Transverse colon (tissue), 4 donors: ENCODE measurements at regions of chr4 and their contacts with region 1.

Region 1: GRCh38 chr4:76007094-76007862 is at the start of gene CXCL9:
- DNase-seq: no peak
- H3K4me3 ChIP-seq: no peak within 1 kb of the TSS
- H3K27ac ChIP-seq: no peak within 1 kb of the TSS
- H3K4me1 ChIP-seq: peaks cover 0 to 24% (median 0%) of the 10 kb centered on the region in 4 donors
- H3K27me3 ChIP-seq: no peaks in the 10 kb centered on the region
- CTCF ChIP-seq: no peak
- EP300 ChIP-seq: no peak
- POLR2A ChIP-seq: no peak
- total RNA-seq, gene CXCL9: 2.5 TPM in 1 of 4 donors, not detected in the others

Region 2: DNA sequence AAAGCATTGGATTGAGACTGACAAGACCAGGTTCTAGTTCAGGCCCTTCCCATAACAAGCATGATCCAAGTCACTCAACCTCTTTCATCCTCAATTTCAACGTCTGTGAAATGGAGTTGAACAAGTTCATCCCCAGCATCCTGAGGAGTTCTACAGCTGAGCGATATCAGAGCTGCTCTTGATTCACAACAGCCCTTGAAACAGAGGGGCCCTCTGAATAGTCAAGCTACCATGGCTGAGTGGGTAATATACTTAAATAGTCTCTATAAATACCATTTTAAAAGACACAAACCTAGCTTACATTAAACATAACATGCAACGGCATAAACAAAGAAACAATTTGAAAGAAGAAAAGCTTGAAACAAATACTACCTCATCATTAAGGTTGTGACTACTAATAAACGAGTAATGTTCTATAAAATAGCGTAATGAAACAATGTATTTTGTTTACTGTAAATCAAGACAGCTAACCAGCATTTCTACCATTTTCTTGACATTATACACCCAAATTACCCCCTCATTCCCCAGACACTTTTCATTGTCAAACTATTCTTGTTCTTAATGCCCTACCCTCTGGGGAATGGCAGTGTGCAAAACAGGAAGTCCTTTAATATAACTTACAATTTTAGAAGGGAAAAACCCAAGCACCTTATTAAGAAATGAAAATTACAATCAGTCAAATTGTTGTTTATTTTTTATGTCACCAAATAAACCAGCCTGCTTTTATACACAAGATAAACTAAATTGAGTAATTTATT is 872.0 kb before region 1 on chr4:
- in situ Hi-C with region 1: no loop called
- intact Hi-C with region 1: no loop called
- DNase-seq: no peak
- H3K4me3 ChIP-seq: no peak overlapping the region
- H3K27ac ChIP-seq: no peak overlapping the region
- H3K4me1 ChIP-seq: no peaks in the 10 kb centered on the region
- H3K27me3 ChIP-seq: no peaks in the 10 kb centered on the region
- CTCF ChIP-seq: no peak
- EP300 ChIP-seq: no peak
- POLR2A ChIP-seq: no peak

Region 3: GRCh38 chr4:76459291-76459723 is 452.0 kb after region 1 on chr4:
- in situ Hi-C with region 1: no loop called
- intact Hi-C with region 1: loop called (anchors 5 kb)
- DNase-seq: no peak
- H3K4me3 ChIP-seq: no peak overlapping the region
- H3K27ac ChIP-seq: peak overlapping the region in 3 of 4 donors; percentile 6 to 63 (median 26)
- H3K4me1 ChIP-seq: no peaks in the 10 kb centered on the region
- H3K27me3 ChIP-seq: no peaks in the 10 kb centered on the region
- CTCF ChIP-seq: no peak
- EP300 ChIP-seq: no peak
- POLR2A ChIP-seq: no peak